ENCODE measurements at regions of chr2 and their contacts with region 1.

Region 1: GRCh38 chr2:238426568-238427434 is at the start of gene ASB1:
- DNase-seq: peak; percentile 77
- H3K4me3 Mint-ChIP-seq: peak within 1 kb of the TSS; percentile 93
- H3K27ac Mint-ChIP-seq: peak within 1 kb of the TSS; percentile 94
- H3K4me1 Mint-ChIP-seq: peaks cover 28% of the 10 kb centered on the region
- H3K27me3 Mint-ChIP-seq: no peaks in the 10 kb centered on the region
- total RNA-seq, gene ASB1: 32.4 and 35.2 TPM in 2 replicates

Region 2: DNA sequence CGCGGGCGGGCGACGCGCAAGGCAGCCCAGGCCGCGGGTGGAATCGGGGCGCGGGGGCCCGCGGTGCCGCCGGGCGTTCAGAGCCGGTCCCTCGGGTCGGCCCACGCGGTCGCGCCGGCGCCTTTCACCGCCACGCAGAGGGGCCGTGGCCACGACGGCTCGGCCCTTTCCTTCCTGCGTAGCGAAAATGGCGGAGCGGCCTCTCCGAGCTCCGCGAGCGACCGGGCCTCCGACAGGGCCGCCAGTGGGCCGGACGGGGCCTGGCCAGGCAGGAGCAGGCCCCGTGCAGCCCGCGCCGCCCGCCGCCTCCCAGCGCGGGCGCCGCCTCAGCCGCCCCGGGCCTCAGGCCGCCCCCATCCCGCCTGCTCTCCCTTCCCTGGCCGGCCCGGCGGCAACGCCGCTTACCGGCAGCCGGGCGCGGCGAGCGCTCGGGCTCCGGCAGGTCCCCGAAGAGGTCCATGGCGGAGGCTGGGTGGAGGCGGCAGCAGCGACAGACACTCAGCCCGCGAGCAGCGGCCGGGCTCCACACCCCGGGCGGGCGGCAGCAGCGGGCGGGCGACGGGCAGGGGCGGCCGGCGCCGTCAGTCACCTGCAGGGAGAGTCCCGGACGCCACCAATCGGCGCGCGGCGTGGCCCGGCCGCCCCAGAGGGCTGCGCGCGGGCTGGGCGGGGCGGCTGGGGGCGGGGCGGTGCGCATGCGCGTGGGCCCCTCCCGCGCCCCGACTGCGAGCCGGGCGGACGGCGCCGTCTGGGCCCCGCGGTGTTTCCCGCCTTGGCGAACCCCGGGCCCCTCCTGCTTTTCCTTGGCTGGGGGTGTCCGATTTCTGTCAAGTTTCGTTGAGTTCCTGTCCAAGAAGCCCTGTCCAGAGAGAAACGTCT is 223.5 kb before region 1 on chr2 and contains the start of gene ILKAP:
- intact Hi-C with region 1: loop called (anchors 2 kb)
- DNase-seq: peak; percentile 88
- H3K4me3 Mint-ChIP-seq: peak within 1 kb of the TSS; percentile 89
- H3K27ac Mint-ChIP-seq: peak within 1 kb of the TSS; percentile 89
- H3K4me1 Mint-ChIP-seq: peaks cover 45% of the 10 kb centered on the region
- H3K27me3 Mint-ChIP-seq: no peaks in the 10 kb centered on the region
- total RNA-seq, gene ILKAP: 77.3 and 79.9 TPM in 2 replicates

Region 3: DNA sequence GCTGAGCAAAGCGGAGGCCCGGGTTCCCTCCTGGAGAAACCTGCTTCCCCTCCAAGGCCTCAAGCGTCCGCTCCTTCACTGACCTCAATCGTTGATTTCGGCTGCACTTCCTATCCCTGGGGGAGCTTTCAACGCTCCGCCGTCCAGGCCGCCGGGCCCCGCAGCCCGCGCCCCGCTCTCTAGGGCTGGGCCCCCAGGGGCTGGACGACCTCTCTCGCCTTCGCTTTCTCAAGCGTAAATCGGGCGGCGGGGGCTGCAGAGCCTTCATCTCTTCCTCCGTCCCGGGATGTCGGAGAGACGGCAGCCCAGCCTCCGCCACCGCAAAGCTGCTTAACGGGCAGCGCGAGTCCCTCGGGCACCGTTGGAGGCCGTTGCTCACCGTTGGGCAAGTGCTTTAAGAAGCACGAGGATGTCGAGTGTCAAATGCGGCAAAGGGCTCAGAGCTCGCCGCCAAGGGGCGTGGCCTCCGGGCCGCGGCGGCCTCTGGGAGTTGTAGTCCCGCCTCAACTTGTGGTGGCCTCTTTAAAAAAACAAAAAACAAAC is 195.5 kb before region 1 on chr2:
- intact Hi-C with region 1: loop called (anchors 5 kb)
- DNase-seq: peak; percentile 77
- H3K4me3 Mint-ChIP-seq: peak overlapping the region; percentile 85
- H3K27ac Mint-ChIP-seq: peak overlapping the region; percentile 56
- H3K4me1 Mint-ChIP-seq: peaks cover 20% of the 10 kb centered on the region
- H3K27me3 Mint-ChIP-seq: peaks cover 52% of the 10 kb centered on the region

Region 4: DNA sequence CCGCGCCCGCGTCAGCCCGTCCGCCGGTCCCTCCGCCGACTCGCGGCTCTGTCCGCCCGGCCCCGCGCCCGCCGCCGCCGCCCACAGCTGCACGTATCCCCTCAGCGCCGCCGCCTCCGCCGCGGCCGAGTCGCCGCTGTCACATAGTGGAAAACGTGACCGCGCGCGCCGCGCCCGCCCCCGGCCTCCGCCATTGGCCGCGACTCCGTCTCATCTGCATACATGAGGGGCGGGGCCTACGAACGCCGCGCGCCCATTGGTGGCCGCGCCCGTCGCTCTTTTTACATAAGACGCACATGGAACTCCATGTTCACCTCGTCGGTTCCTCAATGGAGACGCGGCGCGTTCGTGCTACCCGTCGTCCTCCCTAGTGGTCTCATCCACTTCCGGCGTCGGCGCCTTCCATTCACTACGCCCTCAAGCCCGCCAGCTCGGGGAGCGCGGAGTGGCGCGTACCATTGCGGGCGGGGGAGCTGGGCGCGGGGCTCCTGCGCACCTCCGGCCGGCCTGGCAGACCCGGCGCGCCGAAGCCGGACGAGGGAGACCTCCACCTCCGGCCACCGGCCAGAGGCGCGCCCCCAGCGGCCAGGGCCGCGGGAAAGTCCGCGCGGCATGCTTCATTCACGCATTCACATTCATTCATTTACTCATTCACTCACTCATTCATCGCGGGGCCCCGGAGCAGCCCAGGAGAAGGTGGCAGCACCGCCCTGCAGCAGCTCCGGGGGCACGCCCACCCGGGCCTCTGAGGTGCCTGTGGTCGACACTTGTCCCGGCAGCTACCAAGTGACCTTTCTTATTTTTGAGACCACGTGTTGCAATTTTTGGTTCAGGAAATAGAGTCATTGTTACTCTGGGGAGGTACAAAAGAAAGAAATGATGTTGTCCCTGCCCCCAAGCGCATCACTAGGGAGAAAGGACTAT is 137.9 kb before region 1 on chr2:
- intact Hi-C with region 1: loop called (anchors 1 kb)
- DNase-seq: peak; percentile 97
- H3K4me3 Mint-ChIP-seq: peak overlapping the region; percentile 91
- H3K27ac Mint-ChIP-seq: peak overlapping the region; percentile 97
- H3K4me1 Mint-ChIP-seq: peaks cover 38% of the 10 kb centered on the region
- H3K27me3 Mint-ChIP-seq: peaks cover 4% of the 10 kb centered on the region

Region 5: DNA sequence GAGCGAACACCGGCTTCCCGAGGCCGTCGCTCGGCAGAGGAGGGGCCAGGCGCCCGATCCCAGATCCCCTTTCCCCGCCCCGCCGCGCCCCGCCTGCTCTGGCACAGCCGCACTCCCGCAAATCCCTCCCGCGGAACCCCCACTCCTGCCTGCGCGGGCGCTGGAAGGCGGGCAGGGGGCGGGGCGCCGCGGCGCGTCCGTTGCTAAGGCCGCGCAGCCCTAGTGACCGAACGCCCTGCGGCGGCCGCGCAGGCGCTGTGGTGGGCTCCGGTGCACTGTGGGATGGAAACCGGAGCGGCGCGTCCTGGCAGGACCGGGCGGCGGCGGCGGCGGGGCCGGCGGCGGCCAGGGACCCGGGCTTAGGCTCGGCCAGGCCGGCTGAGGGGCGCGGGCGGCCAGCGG is 106.6 kb before region 1 on chr2 and contains the start of gene TRAF3IP1:
- intact Hi-C with region 1: loop called (anchors 2 kb)
- DNase-seq: peak; percentile 84
- H3K4me3 Mint-ChIP-seq: peak within 1 kb of the TSS; percentile 81
- H3K27ac Mint-ChIP-seq: peak within 1 kb of the TSS; percentile 8
- H3K4me1 Mint-ChIP-seq: peaks cover 15% of the 10 kb centered on the region
- H3K27me3 Mint-ChIP-seq: peaks cover 21% of the 10 kb centered on the region
- total RNA-seq, gene TRAF3IP1: 14.4 and 15.4 TPM in 2 replicates

Region 6: DNA sequence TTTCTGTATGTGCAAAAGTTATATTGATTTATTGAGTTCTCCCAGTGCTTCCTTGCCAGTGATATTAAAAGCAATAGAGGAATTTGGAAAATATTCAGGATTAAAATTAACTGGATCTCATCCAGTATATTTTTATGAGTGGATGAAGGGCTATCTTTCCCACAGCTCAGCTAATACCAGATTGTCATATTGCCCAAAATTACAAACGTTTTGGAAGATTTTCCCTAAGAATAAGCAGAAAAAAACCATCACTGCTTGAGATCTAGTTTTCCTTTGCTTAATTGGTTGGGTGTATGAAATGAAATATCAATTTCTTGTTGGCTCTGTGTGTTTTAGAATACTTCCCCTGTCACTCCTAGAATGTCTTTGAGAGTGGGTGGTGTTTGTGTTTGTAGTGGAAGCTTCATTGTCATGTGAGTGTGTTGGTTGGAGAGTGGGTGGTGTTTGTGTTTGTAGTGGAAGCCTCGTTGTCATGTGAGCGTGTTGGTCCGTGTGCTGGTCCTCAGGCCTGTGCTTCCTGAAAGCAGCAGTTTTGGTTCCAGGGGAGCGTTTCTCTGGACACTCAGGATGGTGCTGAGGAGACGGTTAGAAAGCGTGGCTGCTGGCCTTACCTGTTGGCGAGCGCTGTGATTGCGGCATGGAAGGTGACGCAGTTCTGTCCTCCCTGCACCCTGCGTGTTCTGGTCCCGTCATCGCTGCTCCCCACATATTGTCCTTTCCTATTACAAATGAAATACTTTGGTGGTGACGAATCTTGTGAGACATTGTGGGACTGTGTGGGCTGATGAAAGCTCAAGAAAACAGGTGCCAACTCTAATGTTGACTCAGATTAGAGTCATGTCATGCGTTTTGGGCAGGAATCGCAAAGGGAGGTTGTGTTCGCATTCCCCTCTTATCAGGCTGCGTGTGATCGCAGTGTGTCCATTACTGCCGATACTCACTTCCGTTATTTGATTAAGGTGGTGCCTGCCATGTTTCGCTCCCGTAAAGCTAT is 12.4 kb after region 1 on chr2:
- intact Hi-C with region 1: loop called (anchors 1 kb)
- DNase-seq: no peak
- H3K4me3 Mint-ChIP-seq: peak overlapping the region; percentile 9
- H3K27ac Mint-ChIP-seq: peak overlapping the region; percentile 71
- H3K4me1 Mint-ChIP-seq: peaks cover 46% of the 10 kb centered on the region
- H3K27me3 Mint-ChIP-seq: no peaks in the 10 kb centered on the region

Region 7: GRCh38 chr2:238462782-238463396 is 36.1 kb after region 1 on chr2:
- intact Hi-C with region 1: loop called (anchors 2 kb)
- DNase-seq: no peak
- H3K4me3 Mint-ChIP-seq: no peak overlapping the region
- H3K27ac Mint-ChIP-seq: no peak overlapping the region
- H3K4me1 Mint-ChIP-seq: no peaks in the 10 kb centered on the region
- H3K27me3 Mint-ChIP-seq: peaks cover 7% of the 10 kb centered on the region

Region 8: DNA sequence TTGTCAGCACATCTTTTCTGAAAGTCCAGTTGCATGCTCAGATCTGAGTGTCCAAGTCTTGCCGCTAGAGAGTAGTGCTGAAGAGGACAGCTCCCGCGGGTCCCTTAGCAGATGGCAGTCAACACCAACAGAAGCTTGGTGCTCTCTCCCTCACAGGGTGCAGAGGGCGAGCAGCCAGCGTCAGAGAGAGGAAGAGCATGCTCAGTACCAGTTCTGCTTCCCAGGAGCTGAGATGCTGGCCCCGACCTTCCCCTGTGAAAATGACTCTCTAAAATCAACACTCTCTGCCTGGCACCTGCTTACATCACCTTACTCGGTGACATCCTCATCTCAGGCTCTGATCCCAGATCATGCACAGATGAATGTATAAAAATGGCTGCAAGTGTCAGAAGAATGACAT is 335.1 kb after region 1 on chr2:
- intact Hi-C with region 1: no loop called
- DNase-seq: no peak
- H3K4me3 Mint-ChIP-seq: no peak overlapping the region
- H3K27ac Mint-ChIP-seq: no peak overlapping the region
- H3K4me1 Mint-ChIP-seq: no peaks in the 10 kb centered on the region
- H3K27me3 Mint-ChIP-seq: no peaks in the 10 kb centered on the region